K562 (cell line): ENCODE measurements at regions of chr12 and their contacts with region 1.

Region 1: DNA sequence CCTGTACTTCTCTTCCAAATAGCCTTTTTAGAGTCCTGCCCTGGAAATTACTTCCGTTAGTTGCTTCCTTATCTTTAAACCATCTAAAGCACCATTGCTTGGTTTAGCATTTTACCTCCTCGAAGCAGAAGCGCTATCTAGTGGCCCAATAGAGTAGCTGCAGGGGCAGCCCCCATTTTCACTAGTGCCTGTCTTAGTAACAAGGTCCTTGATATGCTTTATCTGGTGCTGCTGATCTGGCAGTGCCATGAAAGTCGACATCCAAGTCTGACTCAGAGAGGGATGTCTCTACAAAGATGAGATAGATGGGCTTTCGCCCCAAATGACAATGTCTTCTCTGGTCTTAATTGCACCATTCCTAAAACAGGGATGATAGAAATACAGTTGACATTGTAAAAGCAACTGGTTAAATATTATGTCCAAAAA is 25.0 kb upstream of the CIT start:
- DNase-seq: peak; percentile 77 to 85 (median 80)
- ATAC-seq: peak; percentile 96
- H3K4me3 ChIP-seq: no peak overlapping the region
- H3K27ac ChIP-seq: no peak overlapping the region
- H3K4me1 ChIP-seq: peaks cover 0 to 5% of the 10 kb centered on the region in 2 experiments; a peak in 3 of 5 replicates
- H3K27me3 ChIP-seq: no peaks in the 10 kb centered on the region; a peak in 1 of 5 replicates
- CTCF ChIP-seq: peak; percentile 84 to 95 (median 88)
- EP300 ChIP-seq: no peak; the same call in 1 of the 2 replicates
- POLR2A ChIP-seq: no peak
- RAD21 ChIP-seq: peak; percentile 74 to 91

Region 2: DNA sequence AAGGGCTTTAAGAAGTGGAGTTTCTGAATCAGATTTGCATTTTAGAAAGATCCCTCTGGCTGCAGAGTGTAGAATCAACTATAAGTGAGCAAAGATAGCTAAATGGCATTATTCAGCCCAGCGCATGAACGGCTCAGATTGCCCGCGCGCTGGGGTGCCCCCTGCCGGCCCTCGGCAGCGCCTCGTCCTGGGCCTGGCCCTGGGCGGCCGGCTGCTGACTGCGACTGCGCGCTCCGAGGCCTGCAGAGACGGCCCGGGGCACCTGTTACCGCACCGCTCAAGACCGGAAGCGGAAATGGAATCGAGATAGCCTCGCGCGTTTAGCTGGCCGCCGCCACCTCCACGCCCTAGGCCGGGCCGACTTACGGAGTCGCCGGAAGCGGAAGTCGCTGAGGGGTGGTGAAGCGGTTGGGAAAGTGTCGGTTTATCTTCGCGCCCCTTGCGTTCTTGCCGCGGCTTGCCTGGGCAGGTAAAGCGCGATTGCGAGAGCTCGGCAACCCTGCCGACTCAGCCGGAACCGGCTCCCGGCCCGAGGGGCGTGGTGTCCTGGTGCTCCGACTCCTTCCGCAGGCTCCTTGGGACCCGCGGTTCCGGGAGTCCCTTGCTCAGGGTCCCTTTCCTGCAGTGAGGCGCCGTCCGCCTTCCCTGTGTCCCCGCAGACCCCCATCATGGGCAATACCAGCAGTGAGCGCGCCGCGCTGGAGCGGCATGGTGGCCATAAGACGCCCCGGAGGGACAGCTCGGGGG is 234.3 kb before region 1 on chr12 and contains the start of gene PRKAB1:
- CTCF ChIA-PET with region 1: no interaction called
- POLR2A ChIA-PET with region 1: interaction called, 4 read pairs
- in situ Hi-C with region 1: no loop called
- intact Hi-C with region 1: loop called (anchors 10 kb)
- DNase-seq: peak; percentile 94 to 99 (median 94)
- ATAC-seq: peak; percentile 91
- H3K4me3 ChIP-seq: peak within 1 kb of the TSS; percentile 81
- H3K27ac ChIP-seq: peak within 1 kb of the TSS; percentile 97
- H3K4me1 ChIP-seq: peaks cover 22 to 59% of the 10 kb centered on the region in 2 experiments
- H3K27me3 ChIP-seq: no peaks in the 10 kb centered on the region
- CTCF ChIP-seq: peak; percentile 87 to 94 (median 93)
- EP300 ChIP-seq: peak; percentile 78
- POLR2A ChIP-seq: peak; percentile 92
- RAD21 ChIP-seq: peak; percentile 61 to 73
- polyA plus RNA-seq, gene PRKAB1: 32.6 to 38.2 TPM

Region 3: GRCh38 chr12:119695034-119695433 is 207.1 kb before region 1 on chr12:
- CTCF ChIA-PET with region 1: no interaction called
- POLR2A ChIA-PET with region 1: no interaction called
- in situ Hi-C with region 1: no loop called
- intact Hi-C with region 1: loop called (anchors 1 kb)
- DNase-seq: peak; percentile 31 to 37 (median 34)
- ATAC-seq: peak; percentile 80
- H3K4me3 ChIP-seq: no peak overlapping the region
- H3K27ac ChIP-seq: no peak overlapping the region
- H3K4me1 ChIP-seq: peaks cover 0 to 2% of the 10 kb centered on the region in 2 experiments; a peak in 1 of 5 replicates
- H3K27me3 ChIP-seq: no peaks in the 10 kb centered on the region
- CTCF ChIP-seq: peak; percentile 39 to 62 (median 58)
- EP300 ChIP-seq: no peak
- POLR2A ChIP-seq: no peak
- RAD21 ChIP-seq: 0 out of 4 replicates have a peak, but pooled peaks of 1 of the 2 experiments have one; percentile 21

Region 4: GRCh38 chr12:119850330-119850729 is 51.8 kb before region 1 on chr12:
- CTCF ChIA-PET with region 1: no interaction called
- POLR2A ChIA-PET with region 1: no interaction called
- in situ Hi-C with region 1: no loop called
- intact Hi-C with region 1: no loop called
- DNase-seq: no peak
- ATAC-seq: no peak
- H3K4me3 ChIP-seq: no peak overlapping the region
- H3K27ac ChIP-seq: no peak overlapping the region
- H3K4me1 ChIP-seq: no peaks in the 10 kb centered on the region
- H3K27me3 ChIP-seq: no peaks in the 10 kb centered on the region
- CTCF ChIP-seq: no peak
- EP300 ChIP-seq: no peak
- POLR2A ChIP-seq: no peak
- RAD21 ChIP-seq: no peak

Region 5: DNA sequence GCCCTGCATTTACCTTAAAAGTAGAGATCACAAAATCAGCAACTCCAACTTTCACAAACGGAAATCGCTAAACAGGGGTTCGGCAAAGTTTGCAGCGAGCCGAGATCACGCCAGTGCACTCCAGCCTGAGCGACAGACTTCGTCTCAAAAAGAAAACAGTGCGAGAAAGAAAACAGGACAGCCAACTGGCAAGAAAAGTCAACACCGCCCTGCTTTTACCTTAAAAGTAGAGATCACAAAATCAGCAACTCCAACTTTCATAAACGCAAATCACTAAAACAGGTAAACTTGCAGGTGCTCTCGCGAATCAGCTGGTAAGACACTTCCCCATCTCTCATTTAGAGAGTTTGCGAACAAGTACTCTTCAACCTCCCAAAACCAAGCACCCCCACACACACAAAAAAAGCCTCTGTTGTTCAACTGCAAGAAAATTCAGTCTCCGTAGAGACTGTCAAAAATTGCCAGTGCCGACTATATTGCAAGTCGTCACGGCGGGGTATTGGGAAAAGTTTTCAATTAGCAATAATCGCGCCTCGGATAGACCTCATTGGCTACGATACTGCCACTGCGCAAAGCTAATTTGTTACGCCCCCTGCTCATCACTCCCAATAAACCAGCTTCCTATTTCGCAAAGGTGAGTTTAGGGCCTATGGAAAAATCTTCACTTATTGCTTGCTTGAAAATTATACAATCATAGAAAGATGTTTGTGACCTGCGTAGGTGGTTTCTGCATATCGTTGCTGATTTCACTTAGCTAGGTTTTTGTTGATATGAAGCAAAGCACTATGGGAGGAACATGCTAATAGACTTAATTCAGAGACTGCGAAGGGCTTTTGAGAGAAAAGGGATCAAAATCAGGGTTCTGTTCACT is 390.8 kb after region 1 on chr12 and contains the start of gene RNU4-1:
- CTCF ChIA-PET with region 1: no interaction called
- POLR2A ChIA-PET with region 1: no interaction called
- in situ Hi-C with region 1: no loop called
- intact Hi-C with region 1: no loop called
- DNase-seq: peak; percentile 54 to 94 (median 61)
- ATAC-seq: peak; percentile 76
- H3K4me3 ChIP-seq: peak within 1 kb of the TSS; percentile 44
- H3K27ac ChIP-seq: peak within 1 kb of the TSS; percentile 100
- H3K4me1 ChIP-seq: peaks cover 8 to 18% of the 10 kb centered on the region in 2 experiments; a peak in 4 of 5 replicates
- H3K27me3 ChIP-seq: no peaks in the 10 kb centered on the region
- CTCF ChIP-seq: no peak
- EP300 ChIP-seq: peak; percentile 62
- POLR2A ChIP-seq: peak; percentile 100
- RAD21 ChIP-seq: no peak
- polyA plus RNA-seq, gene RNU4-1: not detected